ENCODE measurements at regions of chr7 and their contacts with region 1.

Region 1: DNA sequence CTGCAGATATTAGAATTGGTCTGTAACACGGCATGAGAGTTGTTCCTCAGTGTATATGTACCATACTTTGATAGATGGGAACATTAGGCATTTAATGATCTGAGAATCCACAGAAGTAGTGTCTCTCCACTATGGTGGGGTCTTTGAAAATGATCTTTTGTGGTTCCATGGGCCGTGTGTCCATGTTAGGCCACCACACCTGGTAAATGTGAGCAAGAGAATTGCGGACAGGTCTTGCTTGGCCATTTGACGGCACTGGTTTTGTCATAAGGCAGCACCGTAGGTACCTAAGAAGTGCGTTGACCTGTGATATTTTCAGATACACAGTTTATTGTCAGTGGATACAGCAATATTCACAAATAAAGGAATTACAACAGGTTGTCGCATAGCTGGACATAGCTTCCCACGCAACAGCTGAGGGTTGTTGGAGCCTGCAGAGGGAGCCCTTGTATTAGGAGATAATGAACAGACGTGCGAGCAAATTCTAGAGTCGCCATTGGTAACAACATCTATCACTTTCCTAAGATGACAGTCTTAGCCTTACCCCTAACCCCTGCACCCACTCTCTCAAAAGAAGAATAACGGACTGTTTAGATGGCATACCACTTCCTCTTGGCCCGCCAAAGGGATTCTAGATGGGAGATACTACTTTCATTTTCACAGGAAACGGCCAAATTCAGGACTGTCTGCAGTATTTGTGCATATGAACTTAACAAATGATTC is 111.4 kb downstream of the COL28A1 start:
- DNase-seq: peak; percentile 62 to 75
- H3K4me3 ChIP-seq: no peak overlapping the region
- H3K4me3 Mint-ChIP-seq: no peak overlapping the region
- H3K27ac Mint-ChIP-seq: no peak overlapping the region
- H3K4me1 ChIP-seq: no peaks in the 10 kb centered on the region
- H3K4me1 Mint-ChIP-seq: no peaks in the 10 kb centered on the region
- H3K27me3 ChIP-seq: no peaks in the 10 kb centered on the region
- H3K27me3 Mint-ChIP-seq: no peaks in the 10 kb centered on the region
- CTCF ChIP-seq: peak; percentile 86 to 93

Region 2: GRCh38 chr7:7542251-7542835 is 118.0 kb after region 1 on chr7:
- CTCF ChIA-PET with region 1: no interaction called
- POLR2A ChIA-PET with region 1: no interaction called
- intact Hi-C with region 1: loop called (anchors 1 kb)
- DNase-seq: no peak
- H3K4me3 ChIP-seq: no peak overlapping the region
- H3K4me3 Mint-ChIP-seq: no peak overlapping the region
- H3K27ac Mint-ChIP-seq: no peak overlapping the region
- H3K4me1 ChIP-seq: peaks cover 7% of the 10 kb centered on the region
- H3K4me1 Mint-ChIP-seq: peaks cover 18% of the 10 kb centered on the region
- H3K27me3 ChIP-seq: no peaks in the 10 kb centered on the region
- H3K27me3 Mint-ChIP-seq: no peaks in the 10 kb centered on the region
- CTCF ChIP-seq: no peak

Region 3: GRCh38 chr7:7614018-7614741 is 189.9 kb after region 1 on chr7:
- CTCF ChIA-PET with region 1: no interaction called
- POLR2A ChIA-PET with region 1: no interaction called
- intact Hi-C with region 1: no loop called
- DNase-seq: no peak
- H3K4me3 ChIP-seq: no peak overlapping the region
- H3K4me3 Mint-ChIP-seq: no peak overlapping the region
- H3K27ac Mint-ChIP-seq: no peak overlapping the region
- H3K4me1 ChIP-seq: no peaks in the 10 kb centered on the region
- H3K4me1 Mint-ChIP-seq: no peaks in the 10 kb centered on the region
- H3K27me3 ChIP-seq: no peaks in the 10 kb centered on the region
- H3K27me3 Mint-ChIP-seq: no peaks in the 10 kb centered on the region
- CTCF ChIP-seq: no peak

Region 4: DNA sequence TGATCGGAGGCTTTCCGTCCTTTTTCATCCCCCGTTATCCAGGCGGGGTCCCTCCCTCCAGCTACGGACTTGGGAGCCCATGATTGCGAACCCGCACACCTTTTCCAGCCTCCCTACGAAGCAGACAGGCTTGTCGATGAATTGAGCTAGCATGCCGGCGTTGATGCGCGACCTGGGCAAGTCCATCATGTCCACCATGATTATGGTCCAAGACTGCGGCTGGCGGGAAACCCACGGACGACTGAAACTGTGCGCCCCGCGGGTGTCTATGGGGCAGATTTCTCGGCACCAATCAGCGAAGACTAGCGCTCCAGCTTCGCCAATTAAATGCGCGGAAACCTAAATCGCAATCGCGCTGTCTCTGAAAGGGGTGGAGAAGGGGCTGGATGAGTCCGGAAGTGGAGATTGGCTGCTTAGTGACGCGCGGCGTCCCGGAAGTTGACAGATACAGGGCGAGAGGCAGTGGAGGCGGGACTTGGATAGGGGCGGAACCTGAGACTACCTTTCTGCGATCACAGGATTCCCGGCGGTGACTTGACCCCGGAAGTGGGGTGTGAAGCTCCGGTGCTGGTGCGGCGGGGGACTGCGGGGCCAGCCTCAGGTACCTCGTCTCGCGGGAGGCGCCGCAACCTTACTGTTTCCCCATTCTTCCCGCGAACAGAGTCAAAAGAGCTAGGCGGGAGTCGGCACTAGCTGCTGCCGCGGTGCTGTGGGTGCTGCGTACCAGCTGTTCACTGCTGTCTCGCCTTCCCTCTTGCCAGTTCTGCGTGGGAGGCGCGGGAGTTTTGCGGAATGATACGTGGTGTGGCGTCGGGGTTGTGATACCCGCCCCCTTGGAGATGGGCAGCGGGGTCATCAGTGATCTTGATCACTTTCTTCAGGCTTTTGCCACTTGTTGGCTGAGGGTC is 216.2 kb after region 1 on chr7 and contains the start of gene UMAD1:
- CTCF ChIA-PET with region 1: interaction called, 3 read pairs
- POLR2A ChIA-PET with region 1: no interaction called
- intact Hi-C with region 1: loop called (anchors 1 kb)
- DNase-seq: peak; percentile 99 to 100
- H3K4me3 ChIP-seq: peak within 1 kb of the TSS; percentile 98
- H3K4me3 Mint-ChIP-seq: peak within 1 kb of the TSS; percentile 88
- H3K27ac Mint-ChIP-seq: peak within 1 kb of the TSS; percentile 97
- H3K4me1 ChIP-seq: peaks cover 15% of the 10 kb centered on the region
- H3K4me1 Mint-ChIP-seq: peaks cover 24% of the 10 kb centered on the region
- H3K27me3 ChIP-seq: no peaks in the 10 kb centered on the region
- H3K27me3 Mint-ChIP-seq: no peaks in the 10 kb centered on the region
- CTCF ChIP-seq: no peak
- total RNA-seq, gene UMAD1: 20.0 and 20.3 TPM in 2 replicates

Measured in Caco-2 (cell line).